Activated B cell treated with CpG ODN at 0.5 μM for 24 hours (primary cell): ENCODE measurements at regions of chr16 and their contacts with region 1.

Region 1: GRCh38 chr16:20741554-20742285 is at the start of gene THUMPD1:
- DNase-seq: peak; percentile 92
- ATAC-seq: peak; percentile 95
- H3K4me3 Mint-ChIP-seq: peak within 1 kb of the TSS; percentile 94
- H3K27ac Mint-ChIP-seq: peak within 1 kb of the TSS; percentile 95
- H3K4me1 Mint-ChIP-seq: peaks cover 27% of the 10 kb centered on the region
- H3K27me3 Mint-ChIP-seq: no peaks in the 10 kb centered on the region
- CTCF ChIP-seq: no peak
- total RNA-seq, gene THUMPD1: 41.1 and 42.2 TPM in 2 replicates

Region 2: DNA sequence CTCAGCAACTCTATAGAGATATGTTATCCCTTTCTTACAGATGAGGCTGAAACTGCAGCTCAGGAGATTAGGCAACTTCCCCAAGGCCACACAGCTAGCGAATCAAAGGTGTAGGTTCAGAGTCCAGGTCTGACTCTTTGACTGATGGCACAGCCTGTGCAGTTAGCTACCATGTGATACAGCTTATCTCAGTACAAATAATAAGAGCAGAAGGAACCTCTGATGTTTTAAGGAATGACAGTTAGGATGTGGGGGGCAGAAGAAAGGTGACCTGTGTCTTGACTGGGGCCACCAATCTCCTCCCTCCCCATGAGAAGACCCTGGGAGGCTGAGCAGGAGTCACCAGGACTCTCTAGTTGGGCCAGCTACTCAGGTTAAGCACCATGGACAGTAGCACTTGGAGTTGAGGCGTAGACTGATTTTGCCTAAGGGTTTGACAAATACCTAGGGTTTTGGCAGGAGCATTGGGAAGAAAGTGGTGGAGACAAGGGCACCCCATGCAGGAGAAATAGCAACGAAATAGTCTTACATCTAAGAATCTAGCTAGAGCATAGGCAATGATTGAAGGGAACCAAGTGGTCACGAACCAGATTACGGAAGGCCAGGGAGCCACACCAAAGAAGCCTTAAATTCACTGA is 142.8 kb before region 1 on chr16:
- CTCF ChIA-PET with region 1: no interaction called
- POLR2A ChIA-PET with region 1: no interaction called
- intact Hi-C with region 1: loop called (anchors 1 kb)
- DNase-seq: no peak
- ATAC-seq: no peak
- H3K4me3 Mint-ChIP-seq: no peak overlapping the region
- H3K27ac Mint-ChIP-seq: no peak overlapping the region
- H3K4me1 Mint-ChIP-seq: no peaks in the 10 kb centered on the region
- H3K27me3 Mint-ChIP-seq: peaks cover 7% of the 10 kb centered on the region
- CTCF ChIP-seq: no peak

Region 3: GRCh38 chr16:20675488-20676267 is 66.0 kb before region 1 on chr16:
- CTCF ChIA-PET with region 1: interaction called, 5 read pairs
- POLR2A ChIA-PET with region 1: interaction called, 4 read pairs
- intact Hi-C with region 1: loop called (anchors 1 kb)
- DNase-seq: no peak
- ATAC-seq: peak; percentile 50
- H3K4me3 Mint-ChIP-seq: peak overlapping the region; percentile 85
- H3K27ac Mint-ChIP-seq: peak overlapping the region; percentile 88
- H3K4me1 Mint-ChIP-seq: peaks cover 55% of the 10 kb centered on the region
- H3K27me3 Mint-ChIP-seq: no peaks in the 10 kb centered on the region
- CTCF ChIP-seq: no peak

Region 4: DNA sequence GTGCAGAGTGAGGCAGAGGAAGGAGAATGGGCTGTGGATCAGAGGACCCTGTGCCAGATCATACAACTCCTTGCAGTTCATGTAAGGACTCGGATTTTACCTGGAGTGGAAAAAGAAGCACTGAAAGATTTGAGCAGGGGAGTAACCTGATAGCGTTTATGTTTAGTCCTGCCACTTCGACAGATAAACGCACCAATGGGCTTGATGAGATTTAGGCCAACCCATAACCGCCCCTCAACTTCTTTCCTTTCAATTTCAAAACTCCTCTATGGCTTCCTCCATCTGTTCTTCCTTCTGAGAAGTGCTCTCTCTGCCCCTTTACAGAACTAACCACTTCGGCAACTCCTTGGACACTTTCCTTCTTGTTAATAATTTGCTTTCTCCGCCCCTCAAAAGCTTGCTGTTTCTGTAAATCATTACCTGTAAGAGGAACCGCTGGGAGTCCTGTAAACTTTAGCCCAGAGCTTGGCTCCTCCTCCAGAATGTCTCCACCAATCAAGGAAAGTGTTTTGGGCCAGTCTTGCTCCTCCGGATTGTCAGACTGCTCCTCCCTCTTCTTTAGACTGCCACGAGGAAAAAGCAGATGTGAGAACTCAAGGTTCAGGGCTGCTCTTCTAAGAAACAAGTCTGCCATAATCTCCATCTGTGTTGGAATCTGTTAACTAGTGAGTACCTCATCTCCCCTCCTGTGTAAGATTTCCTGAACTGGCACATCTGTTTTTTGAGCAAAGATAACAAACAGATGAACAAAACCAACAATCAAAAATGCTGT is 21.9 kb after region 1 on chr16 and contains the start of gene ACSM3:
- CTCF ChIA-PET with region 1: no interaction called
- POLR2A ChIA-PET with region 1: interaction called, 19 read pairs
- intact Hi-C with region 1: loop called (anchors 1 kb)
- DNase-seq: peak; percentile 26
- ATAC-seq: peak; percentile 100
- H3K4me3 Mint-ChIP-seq: peak within 1 kb of the TSS; percentile 90
- H3K27ac Mint-ChIP-seq: peak within 1 kb of the TSS; percentile 93
- H3K4me1 Mint-ChIP-seq: peaks cover 15% of the 10 kb centered on the region
- H3K27me3 Mint-ChIP-seq: no peaks in the 10 kb centered on the region
- CTCF ChIP-seq: no peak
- total RNA-seq, gene ACSM3: 12.8 and 13.6 TPM in 2 replicates

Region 5: DNA sequence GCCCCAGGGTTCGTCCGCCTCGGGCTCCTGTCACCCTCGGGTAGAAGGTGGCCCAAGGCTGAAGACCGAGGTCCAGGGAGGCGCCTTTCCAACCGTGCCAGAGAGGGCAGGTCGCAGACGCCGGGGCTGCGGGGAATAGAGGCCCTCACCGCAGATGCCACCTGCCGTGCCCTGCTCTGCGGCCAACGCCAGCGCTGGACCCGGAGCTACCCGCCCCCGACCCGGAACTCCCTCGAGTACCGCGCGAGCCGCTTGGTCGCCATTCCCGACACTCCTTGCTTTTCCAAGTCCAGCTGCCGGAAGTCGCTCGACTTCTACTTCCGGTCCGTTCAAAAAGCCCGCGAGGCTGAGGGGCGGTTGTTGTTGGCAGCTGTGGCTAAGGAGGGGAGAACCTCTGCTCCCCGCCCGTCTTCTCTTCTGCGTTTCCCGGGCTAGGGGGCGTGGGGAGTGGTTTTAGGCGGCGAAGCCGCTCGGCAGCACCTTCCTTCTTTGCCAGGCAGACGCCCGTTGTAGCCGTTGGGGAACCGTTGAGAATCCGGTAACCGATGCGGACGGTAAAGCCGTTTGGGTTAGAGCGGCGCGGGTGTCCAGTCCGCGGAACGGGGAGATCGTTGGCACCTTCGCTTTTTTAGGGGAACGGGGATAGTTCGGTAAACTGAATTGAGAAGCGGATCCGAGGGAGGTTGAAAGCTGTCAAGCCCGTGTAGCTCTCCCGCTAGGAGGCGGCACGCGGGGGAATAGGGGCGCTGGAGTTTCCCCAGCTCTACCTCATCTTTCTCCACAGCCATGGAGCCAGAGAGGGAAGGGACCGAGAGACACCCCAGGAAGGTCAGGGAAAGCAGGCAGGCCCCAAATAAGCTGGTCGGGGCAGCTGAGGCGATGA is 64.7 kb after region 1 on chr16 and contains the starts of genes ERI2 and REXO5:
- CTCF ChIA-PET with region 1: no interaction called
- POLR2A ChIA-PET with region 1: interaction called, 6 read pairs
- intact Hi-C with region 1: loop called (anchors 2 kb)
- DNase-seq: peak; percentile 67
- ATAC-seq: peak; percentile 86
- H3K4me3 Mint-ChIP-seq: peak within 1 kb of the TSS; percentile 98
- H3K27ac Mint-ChIP-seq: peak within 1 kb of the TSS; percentile 77
- H3K4me1 Mint-ChIP-seq: peaks cover 15% of the 10 kb centered on the region
- H3K27me3 Mint-ChIP-seq: no peaks in the 10 kb centered on the region
- CTCF ChIP-seq: no peak
- total RNA-seq, gene ERI2: 4.3 and 4.5 TPM in 2 replicates
- total RNA-seq, gene REXO5: 0.44 and 0.83 TPM in 2 replicates

Region 6: GRCh38 chr16:20900299-20901067 is 158.8 kb after region 1 on chr16 and contains the starts of genes DCUN1D3 and LYRM1:
- CTCF ChIA-PET with region 1: no interaction called
- POLR2A ChIA-PET with region 1: interaction called, 3 read pairs
- intact Hi-C with region 1: loop called (anchors 2 kb)
- DNase-seq: peak; percentile 75
- ATAC-seq: peak; percentile 76
- H3K4me3 Mint-ChIP-seq: peak within 1 kb of the TSS; percentile 91
- H3K27ac Mint-ChIP-seq: peak within 1 kb of the TSS; percentile 95
- H3K4me1 Mint-ChIP-seq: peaks cover 61% of the 10 kb centered on the region
- H3K27me3 Mint-ChIP-seq: no peaks in the 10 kb centered on the region
- CTCF ChIP-seq: no peak
- total RNA-seq, gene DCUN1D3: 4.1 and 4.7 TPM in 2 replicates
- total RNA-seq, gene LYRM1: 20.7 and 22.4 TPM in 2 replicates